AG04449 (cell line): ENCODE measurements at regions of chr5 and their contacts with region 1.

Region 1: DNA sequence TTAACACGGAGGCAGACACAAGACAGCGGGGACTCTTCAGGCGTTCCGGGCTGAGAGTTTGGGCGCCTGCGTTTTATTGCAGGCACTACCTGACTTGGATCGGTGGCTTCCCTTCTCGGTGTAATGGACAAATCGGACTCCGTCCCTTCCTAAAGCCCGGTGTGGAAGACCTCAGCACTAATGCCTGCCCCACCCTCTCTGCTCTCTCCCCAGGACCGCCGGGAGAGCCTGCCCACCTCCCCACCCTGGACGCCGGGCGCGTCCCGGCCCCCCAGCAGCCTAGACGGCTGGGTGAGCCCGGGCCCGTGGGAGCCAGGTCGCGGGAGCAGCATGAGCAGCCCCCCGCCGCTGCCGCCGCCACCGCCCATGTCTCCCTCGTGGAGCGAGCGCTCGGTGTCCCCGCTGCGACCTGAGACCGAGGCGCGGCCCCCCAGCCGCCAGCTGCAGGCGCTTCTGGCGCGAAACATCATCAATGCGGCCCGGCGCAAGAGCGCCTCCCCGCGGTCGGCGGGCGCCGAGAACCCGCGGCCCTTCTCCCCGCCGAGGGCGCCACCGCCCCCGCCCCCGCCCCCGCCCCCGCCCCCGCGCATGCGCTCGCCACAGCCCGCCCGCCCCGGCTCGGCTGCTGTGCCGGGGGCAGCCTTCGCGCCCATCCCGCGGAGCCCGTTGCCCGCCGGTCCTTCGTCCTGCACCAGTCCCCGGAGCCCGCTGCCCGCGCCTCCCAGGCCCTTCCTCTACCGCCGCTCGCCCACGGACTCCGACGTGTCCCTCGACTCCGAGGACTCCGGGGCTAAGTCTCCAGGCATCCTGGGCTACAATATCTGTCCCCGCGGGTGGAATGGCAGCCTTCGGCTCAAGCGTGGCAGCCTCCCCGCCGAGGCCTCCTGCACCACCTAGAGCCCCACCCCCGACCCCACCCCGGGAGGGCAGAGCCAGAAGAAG is 4.6 kb upstream of the MYOZ3 start:
- DNase-seq: no peak
- H3K4me3 ChIP-seq: peak overlapping the region; percentile 59
- CTCF ChIP-seq: peak; percentile 78

Region 2: DNA sequence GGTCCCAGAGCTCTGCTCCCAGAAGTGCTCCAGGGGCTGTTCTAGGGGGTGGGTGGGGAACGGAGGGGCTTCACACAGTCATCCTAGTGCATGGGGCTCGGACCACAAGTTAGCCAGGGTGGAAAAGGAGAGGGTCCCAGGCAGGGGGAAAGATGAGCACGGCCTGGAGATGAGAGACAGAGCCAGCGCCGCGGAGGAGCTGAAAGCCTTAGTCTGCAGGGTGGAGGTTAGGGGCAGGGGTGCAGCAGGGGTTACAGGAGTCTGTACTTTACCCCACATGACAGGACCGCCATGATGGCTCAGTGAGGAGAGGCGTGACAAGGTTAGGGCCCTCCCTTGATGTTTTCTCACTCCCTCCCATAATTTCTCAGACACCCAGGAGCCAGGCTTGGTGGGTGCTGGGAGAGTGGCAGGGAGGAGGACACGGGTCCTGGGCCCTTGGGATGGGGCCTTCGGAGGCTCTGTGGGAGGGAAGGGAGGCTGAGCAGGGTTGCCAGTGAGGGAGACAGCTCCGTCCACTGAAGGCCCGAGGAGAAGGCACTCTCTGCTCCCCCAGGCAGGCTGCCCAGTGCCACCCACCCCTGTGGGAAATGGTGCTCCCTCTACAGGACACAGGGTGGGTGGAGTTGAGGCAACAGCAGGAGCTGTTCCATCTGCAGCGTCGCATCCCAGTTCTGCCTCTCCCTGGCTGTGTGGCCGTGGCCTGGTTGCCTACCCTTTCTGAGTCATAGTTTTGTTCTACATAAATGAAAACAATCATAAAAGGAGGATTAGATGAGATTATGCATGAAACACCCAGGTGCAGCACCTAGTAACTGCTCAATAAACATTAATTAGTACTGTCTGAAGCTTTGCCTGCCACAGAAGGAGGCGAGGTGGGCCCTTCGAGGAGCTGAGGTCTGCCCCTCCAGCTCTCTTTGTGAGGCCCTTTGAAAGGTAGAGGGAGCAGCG is 82.3 kb before region 1 on chr5:
- CTCF ChIA-PET with region 1: interaction called, 366 read pairs
- POLR2A ChIA-PET with region 1: no interaction called
- DNase-seq: no peak
- H3K4me3 ChIP-seq: no peak overlapping the region
- CTCF ChIP-seq: peak; percentile 10

Region 3: GRCh38 chr5:150640311-150641005 is 16.0 kb before region 1 on chr5 and contains the start of gene SYNPO:
- CTCF ChIA-PET with region 1: interaction called, 111 read pairs
- POLR2A ChIA-PET with region 1: interaction called, 5 read pairs
- DNase-seq: peak; percentile 79
- H3K4me3 ChIP-seq: peak within 1 kb of the TSS; percentile 76
- CTCF ChIP-seq: no peak

Region 4: DNA sequence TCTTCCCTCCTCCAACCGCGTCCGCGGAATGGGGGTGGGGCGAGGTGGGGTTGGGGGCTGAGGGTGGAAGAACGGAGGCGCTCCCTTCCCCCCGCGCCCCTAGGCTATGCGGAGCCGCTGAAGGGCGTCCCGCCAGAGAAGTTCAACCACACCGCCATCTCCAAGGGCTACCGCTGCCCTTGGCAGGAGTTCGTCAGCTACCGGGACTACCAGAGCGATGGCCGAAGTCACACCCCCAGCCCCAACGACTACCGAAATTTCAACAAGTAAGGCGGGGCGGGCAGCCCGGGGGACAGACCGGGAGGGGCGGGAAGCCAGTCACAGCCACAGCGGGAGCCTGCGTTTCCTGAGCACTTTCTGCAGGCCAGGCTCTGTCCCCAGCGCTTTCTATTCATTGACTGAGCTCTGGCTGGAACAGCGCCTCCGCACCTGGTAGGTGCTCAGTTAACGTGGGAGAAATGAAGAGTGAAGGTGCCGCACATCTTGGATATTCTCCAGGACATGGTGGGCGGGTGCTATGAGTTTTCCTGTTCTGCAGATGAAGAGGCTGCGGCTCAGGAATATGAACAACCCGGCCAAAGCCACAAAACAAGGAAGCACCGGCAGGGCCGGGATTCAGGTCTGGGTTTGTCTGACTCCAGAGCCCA is 15.9 kb after region 1 on chr5:
- CTCF ChIA-PET with region 1: interaction called, 38 read pairs
- POLR2A ChIA-PET with region 1: no interaction called
- DNase-seq: no peak
- H3K4me3 ChIP-seq: peak overlapping the region; percentile 59
- CTCF ChIP-seq: no peak